ENCODE measurements at regions of chr7 and their contacts with region 1.

Region 1: DNA sequence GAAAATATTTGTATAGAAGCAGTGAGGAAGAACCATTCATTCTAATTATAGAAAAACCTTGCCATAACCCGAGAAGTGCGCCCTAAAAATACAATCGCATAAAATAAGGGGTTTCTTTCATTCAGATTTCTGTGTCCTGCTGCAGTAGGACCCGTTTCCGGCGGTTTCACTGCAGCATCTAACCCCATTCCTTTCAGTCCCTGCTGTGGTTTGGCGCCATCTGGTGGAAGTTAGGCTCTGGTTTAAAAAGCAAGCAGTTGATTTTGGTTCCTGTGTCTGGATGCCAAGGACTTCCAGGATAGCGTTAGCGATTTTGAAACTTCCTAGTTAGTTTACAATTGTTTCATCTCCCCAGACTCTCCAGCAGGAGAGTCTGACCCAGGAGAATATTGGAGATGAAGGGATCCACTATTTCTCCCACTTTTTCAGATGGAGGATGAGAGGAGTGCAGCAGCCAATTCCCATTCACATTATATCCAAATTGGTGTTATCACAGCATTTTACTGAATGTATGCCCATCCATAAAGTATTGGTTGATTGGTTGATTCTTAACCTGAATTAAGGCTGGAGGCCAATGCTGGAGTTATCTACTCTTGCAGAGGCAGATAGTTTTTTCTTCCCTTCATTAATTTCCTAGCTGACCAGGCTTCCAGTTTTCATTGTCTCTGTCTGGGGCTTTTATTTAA is 128.8 kb upstream of the CACNA2D1 start:
- DNase-seq: no peak
- H3K4me3 ChIP-seq: no peak overlapping the region
- H3K27ac ChIP-seq: no peak overlapping the region
- H3K4me1 ChIP-seq: peaks cover 0 to 6% (median 0%) of the 10 kb centered on the region in 3 donors
- H3K27me3 ChIP-seq: no peaks in the 10 kb centered on the region
- CTCF ChIP-seq: peak; percentile 62 to 93 (median 80)
- POLR2A ChIP-seq: no peak

Region 2: DNA sequence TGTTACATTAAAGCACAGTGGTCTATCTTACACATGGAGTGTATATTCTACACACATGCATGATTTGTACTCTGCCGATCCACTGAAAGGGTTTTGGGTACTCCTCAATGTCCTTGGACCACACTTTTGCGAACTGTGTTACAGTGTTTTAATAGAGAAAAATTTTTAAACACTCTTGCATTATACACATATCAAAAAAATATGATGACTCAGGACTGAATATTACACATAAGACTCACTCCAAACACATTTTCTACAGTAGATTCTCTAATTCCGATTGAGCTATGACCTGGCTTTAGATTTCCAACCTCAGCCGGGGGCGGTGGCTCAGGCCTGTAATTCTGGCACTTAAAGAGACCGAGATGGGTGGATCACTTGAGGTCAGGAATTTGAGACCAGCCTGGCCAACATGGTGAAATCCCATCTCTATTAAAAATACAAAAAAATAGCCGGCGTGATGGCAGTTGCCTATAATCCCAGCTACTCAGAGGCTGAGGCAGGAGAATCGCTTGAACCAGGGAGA is 351.1 kb before region 1 on chr7:
- intact Hi-C with region 1: loop called (anchors 10 kb)
- DNase-seq: no peak
- H3K4me3 ChIP-seq: no peak overlapping the region
- H3K27ac ChIP-seq: no peak overlapping the region
- H3K4me1 ChIP-seq: no peaks in the 10 kb centered on the region
- H3K27me3 ChIP-seq: no peaks in the 10 kb centered on the region
- CTCF ChIP-seq: no peak
- POLR2A ChIP-seq: no peak

Region 3: GRCh38 chr7:82358009-82358578 is 214.2 kb before region 1 on chr7:
- intact Hi-C with region 1: no loop called
- DNase-seq: no peak
- H3K4me3 ChIP-seq: no peak overlapping the region
- H3K27ac ChIP-seq: no peak overlapping the region
- H3K4me1 ChIP-seq: no peaks in the 10 kb centered on the region
- H3K27me3 ChIP-seq: no peaks in the 10 kb centered on the region
- CTCF ChIP-seq: no peak
- POLR2A ChIP-seq: no peak

Measured in esophagus squamous epithelium (tissue), 5 donors.